ENCODE measurements at regions of chr22 and their contacts with region 1.

Region 1: GRCh38 chr22:21766691-21767462 is 31.3 kb upstream of the YPEL1 start:
- DNase-seq: peak; percentile 85
- H3K4me3 Mint-ChIP-seq: peak overlapping the region; percentile 51
- H3K27ac Mint-ChIP-seq: peak overlapping the region; percentile 84
- H3K4me1 Mint-ChIP-seq: peaks cover 60% of the 10 kb centered on the region
- H3K27me3 Mint-ChIP-seq: no peaks in the 10 kb centered on the region

Region 2: DNA sequence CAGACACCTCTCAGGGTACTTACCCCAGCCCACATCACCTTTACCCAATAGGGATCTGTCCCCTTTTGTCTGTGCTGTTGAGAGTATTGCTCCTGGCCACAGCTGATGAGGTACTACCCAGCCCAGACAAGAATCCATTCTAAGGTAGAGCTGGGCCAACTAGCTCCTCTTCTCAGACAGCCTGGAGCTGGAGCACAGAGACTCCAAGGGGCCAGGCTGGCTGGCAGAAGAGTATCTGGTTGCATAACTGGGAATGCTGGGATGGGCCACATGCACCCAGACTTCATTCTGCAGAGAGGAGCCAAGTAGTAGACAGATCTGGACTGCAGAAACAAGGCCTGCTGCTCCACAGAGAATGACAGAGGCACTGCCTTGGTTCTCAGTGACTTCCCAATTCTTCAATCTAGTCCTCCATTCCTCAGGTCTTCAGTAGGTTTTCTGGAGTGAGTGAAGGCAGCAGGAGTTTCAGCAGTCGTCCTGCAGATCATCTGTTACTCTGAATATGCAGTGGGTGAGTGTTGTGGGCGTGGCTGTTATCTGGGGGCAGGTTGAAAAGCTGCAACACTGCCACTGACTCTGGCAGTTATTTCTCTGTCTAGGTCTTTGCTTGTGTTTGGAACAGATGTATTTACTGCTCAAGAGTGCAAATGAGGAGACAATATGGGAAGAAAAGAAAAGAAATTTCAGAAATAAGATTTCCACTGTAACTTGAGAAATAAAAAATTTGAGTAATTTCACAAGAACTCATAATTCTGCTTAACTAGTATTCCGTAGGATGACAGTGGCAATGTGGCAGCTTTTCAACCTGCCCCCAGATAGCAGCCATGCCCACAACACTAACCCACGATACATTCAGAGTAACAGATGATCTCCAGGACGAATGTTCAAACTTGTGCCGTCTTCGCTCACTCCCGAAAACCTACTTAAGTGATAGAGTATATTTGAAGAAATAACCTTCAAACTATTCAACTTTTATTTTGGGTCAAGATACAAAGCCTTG is 65.7 kb after region 1 on chr22:
- intact Hi-C with region 1: no loop called
- DNase-seq: no peak
- H3K4me3 Mint-ChIP-seq: no peak overlapping the region
- H3K27ac Mint-ChIP-seq: no peak overlapping the region
- H3K4me1 Mint-ChIP-seq: peaks cover 28% of the 10 kb centered on the region
- H3K27me3 Mint-ChIP-seq: no peaks in the 10 kb centered on the region

Region 3: GRCh38 chr22:21867528-21868266 is 100.8 kb after region 1 on chr22 and contains the start of gene MAPK1:
- intact Hi-C with region 1: loop called (anchors 2 kb)
- DNase-seq: peak; percentile 98
- H3K4me3 Mint-ChIP-seq: peak within 1 kb of the TSS; percentile 92
- H3K27ac Mint-ChIP-seq: peak within 1 kb of the TSS; percentile 97
- H3K4me1 Mint-ChIP-seq: peaks cover 34% of the 10 kb centered on the region
- H3K27me3 Mint-ChIP-seq: peaks cover 19% of the 10 kb centered on the region
- total RNA-seq, gene MAPK1: 101 TPM in 2 replicates

Measured in activated CD4-positive, alpha-beta T cell treated with anti-CD3 and anti-CD28 coated beads, Interleukin-2, amount 10 ng/mL, durations not matched to agents 24 days and 14 days (primary cell).